ENCODE measurements at regions of chr20 and their contacts with region 1.

Region 1: GRCh38 chr20:32574296-32575226 is 10.6 kb downstream of the NOL4L start:
- DNase-seq: no peak
- ATAC-seq: peak; percentile 12 to 26
- H3K4me3 Mint-ChIP-seq: peak overlapping the region in 2 of 10 donors; percentile 41 to 62
- H3K27ac Mint-ChIP-seq: peak overlapping the region in 6 of 10 donors; percentile 19 to 94 (median 84)
- H3K4me1 Mint-ChIP-seq: peaks cover 22 to 46% (median 34%) of the 10 kb centered on the region in 4 donors
- H3K27me3 Mint-ChIP-seq: no peaks in the 10 kb centered on the region

Region 2: GRCh38 chr20:32560989-32561830 is 13.4 kb before region 1 on chr20:
- POLR2A ChIA-PET with region 1: interaction called, 12 read pairs
- DNase-seq: peak in 4 of 10 donors; percentile 36 to 70 (median 46)
- ATAC-seq: peak; percentile 82 to 84
- H3K4me3 Mint-ChIP-seq: peak overlapping the region; percentile 52 to 81 (median 68)
- H3K27ac Mint-ChIP-seq: peak overlapping the region; percentile 82 to 94 (median 88)
- H3K4me1 Mint-ChIP-seq: peaks cover 45 to 80% (median 67%) of the 10 kb centered on the region in 4 donors
- H3K27me3 Mint-ChIP-seq: no peaks in the 10 kb centered on the region

Region 3: GRCh38 chr20:32592022-32592421 is 17.5 kb after region 1 on chr20:
- POLR2A ChIA-PET with region 1: interaction called, 10 read pairs
- DNase-seq: no peak
- ATAC-seq: no peak
- H3K4me3 Mint-ChIP-seq: no peak overlapping the region
- H3K27ac Mint-ChIP-seq: no peak overlapping the region
- H3K4me1 Mint-ChIP-seq: peaks cover 8 to 15% (median 11%) of the 10 kb centered on the region in 4 donors
- H3K27me3 Mint-ChIP-seq: no peaks in the 10 kb centered on the region

Measured in naive thymus-derived CD8-positive, alpha-beta T cell (primary cell).